ENCODE measurements at regions of chr9 and their contacts with region 1.

Region 1: DNA sequence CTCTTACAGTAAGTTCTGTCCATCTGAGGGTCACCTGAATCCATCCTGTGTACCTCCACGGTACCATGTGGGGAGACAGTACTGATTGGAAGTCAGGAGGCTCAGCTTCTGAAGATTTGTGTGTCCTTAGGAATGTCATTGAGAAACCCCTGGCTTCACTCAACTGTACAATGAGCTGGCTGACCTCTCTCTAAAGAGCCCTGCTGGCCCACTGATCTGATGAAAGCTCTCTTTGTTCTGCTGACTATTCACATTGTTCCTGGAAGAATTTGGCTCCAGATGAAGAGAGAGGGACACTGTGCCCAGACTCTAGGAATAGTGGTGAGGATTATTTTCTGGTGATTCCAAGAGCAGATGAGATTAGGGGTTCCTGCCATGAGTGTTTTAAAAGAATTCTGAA is 141.2 kb downstream of the LURAP1L start:
- DNase-seq: no peak
- ATAC-seq: no peak
- H3K4me3 ChIP-seq: no peak overlapping the region
- H3K27ac ChIP-seq: no peak overlapping the region
- H3K4me1 ChIP-seq: no peaks in the 10 kb centered on the region
- H3K27me3 ChIP-seq: no peaks in the 10 kb centered on the region
- CTCF ChIP-seq: no peak
- EP300 ChIP-seq: no peak
- POLR2A ChIP-seq: no peak
- RAD21 ChIP-seq: no peak

Region 2: GRCh38 chr9:12838546-12838945 is 77.5 kb before region 1 on chr9:
- CTCF ChIA-PET with region 1: no interaction called
- POLR2A ChIA-PET with region 1: no interaction called
- in situ Hi-C with region 1: no loop called
- intact Hi-C with region 1: loop called (anchors 10 kb)
- DNase-seq: no peak
- ATAC-seq: no peak
- H3K4me3 ChIP-seq: no peak overlapping the region
- H3K27ac ChIP-seq: no peak overlapping the region
- H3K4me1 ChIP-seq: no peaks in the 10 kb centered on the region
- H3K27me3 ChIP-seq: no peaks in the 10 kb centered on the region
- CTCF ChIP-seq: no peak
- EP300 ChIP-seq: no peak
- POLR2A ChIP-seq: no peak
- RAD21 ChIP-seq: no peak

Region 3: GRCh38 chr9:13395156-13395555 is 479.1 kb after region 1 on chr9:
- CTCF ChIA-PET with region 1: no interaction called
- POLR2A ChIA-PET with region 1: no interaction called
- in situ Hi-C with region 1: no loop called
- intact Hi-C with region 1: no loop called
- DNase-seq: no peak
- ATAC-seq: no peak
- H3K4me3 ChIP-seq: no peak overlapping the region
- H3K27ac ChIP-seq: no peak overlapping the region
- H3K4me1 ChIP-seq: no peaks in the 10 kb centered on the region
- H3K27me3 ChIP-seq: no peaks in the 10 kb centered on the region
- CTCF ChIP-seq: no peak
- EP300 ChIP-seq: no peak
- POLR2A ChIP-seq: no peak
- RAD21 ChIP-seq: no peak

Measured in K562 (cell line).